CD8-positive, alpha-beta T cell (primary cell): ENCODE measurements at regions of chr9 and their contacts with region 1.

Region 1: GRCh38 chr9:133701862-133702797 is 36.0 kb downstream of the SARDH start:
- DNase-seq: peak in 8 of 9 experiments; percentile 55 to 85 (median 73)
- ATAC-seq: peak; percentile 76
- H3K4me3 ChIP-seq: peak overlapping the region; percentile 55 to 69
- H3K4me3 Mint-ChIP-seq: peak overlapping the region; percentile 75
- H3K27ac ChIP-seq: peak overlapping the region; percentile 71 to 81
- H3K27ac Mint-ChIP-seq: peak overlapping the region; percentile 97
- H3K4me1 ChIP-seq: peaks cover 41% of the 10 kb centered on the region
- H3K4me1 Mint-ChIP-seq: peaks cover 59% of the 10 kb centered on the region
- H3K27me3 ChIP-seq: no peaks in the 10 kb centered on the region
- H3K27me3 Mint-ChIP-seq: no peaks in the 10 kb centered on the region
- CTCF ChIP-seq: no peak

Region 2: GRCh38 chr9:133387425-133388079 is 314.6 kb before region 1 on chr9:
- CTCF ChIA-PET with region 1: no interaction called
- POLR2A ChIA-PET with region 1: no interaction called
- intact Hi-C with region 1: no loop called
- DNase-seq: no peak
- ATAC-seq: no peak
- H3K4me3 ChIP-seq: no peak overlapping the region
- H3K4me3 Mint-ChIP-seq: no peak overlapping the region
- H3K27ac ChIP-seq: no peak overlapping the region
- H3K27ac Mint-ChIP-seq: no peak overlapping the region
- H3K4me1 ChIP-seq: no peaks in the 10 kb centered on the region
- H3K4me1 Mint-ChIP-seq: no peaks in the 10 kb centered on the region
- H3K27me3 ChIP-seq: peaks cover 0 to 4% of the 10 kb centered on the region in 2 experiments
- H3K27me3 Mint-ChIP-seq: peaks cover 3% of the 10 kb centered on the region
- CTCF ChIP-seq: no peak

Region 3: GRCh38 chr9:133563001-133563796 is 138.9 kb before region 1 on chr9:
- CTCF ChIA-PET with region 1: no interaction called
- POLR2A ChIA-PET with region 1: no interaction called
- intact Hi-C with region 1: no loop called
- DNase-seq: no peak
- ATAC-seq: no peak
- H3K4me3 ChIP-seq: no peak overlapping the region
- H3K4me3 Mint-ChIP-seq: no peak overlapping the region
- H3K27ac ChIP-seq: no peak overlapping the region
- H3K27ac Mint-ChIP-seq: peak overlapping the region; percentile 73
- H3K4me1 ChIP-seq: peaks cover 7% of the 10 kb centered on the region
- H3K4me1 Mint-ChIP-seq: peaks cover 10% of the 10 kb centered on the region
- H3K27me3 ChIP-seq: no peaks in the 10 kb centered on the region
- H3K27me3 Mint-ChIP-seq: peaks cover 4% of the 10 kb centered on the region
- CTCF ChIP-seq: no peak

Region 4: DNA sequence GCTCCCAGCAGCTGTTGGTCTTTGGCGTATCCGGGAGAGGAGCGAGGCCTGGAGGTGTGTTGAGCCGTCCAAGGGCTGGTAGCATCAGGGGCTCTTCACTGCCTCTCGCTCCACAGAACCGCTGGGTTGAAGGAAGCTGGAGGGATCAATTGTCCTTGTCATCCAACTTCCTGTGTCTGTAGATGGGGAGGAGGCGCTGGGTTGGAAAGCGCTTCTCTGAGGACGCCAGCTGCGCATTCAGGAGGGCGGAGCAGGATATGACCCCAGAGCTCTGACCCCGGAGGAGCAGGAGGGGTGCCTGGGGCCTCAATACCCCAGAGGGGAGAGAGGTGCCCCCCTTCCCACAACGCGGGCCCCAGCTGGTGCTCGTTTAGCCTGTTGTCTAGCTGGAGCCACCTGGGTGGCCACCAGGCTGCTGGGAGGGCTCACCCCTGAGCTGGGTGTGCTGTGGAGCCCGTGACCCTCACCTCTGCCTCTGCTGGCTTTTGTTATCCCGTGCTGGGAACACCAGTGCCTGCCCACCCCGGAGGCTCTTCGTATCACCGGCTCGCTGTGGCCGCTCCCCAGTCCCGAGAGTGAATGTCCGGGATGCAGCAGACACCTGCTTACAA is 67.9 kb before region 1 on chr9:
- CTCF ChIA-PET with region 1: no interaction called
- POLR2A ChIA-PET with region 1: no interaction called
- intact Hi-C with region 1: no loop called
- DNase-seq: no peak
- ATAC-seq: no peak
- H3K4me3 ChIP-seq: no peak overlapping the region
- H3K4me3 Mint-ChIP-seq: no peak overlapping the region
- H3K27ac ChIP-seq: no peak overlapping the region
- H3K27ac Mint-ChIP-seq: no peak overlapping the region
- H3K4me1 ChIP-seq: no peaks in the 10 kb centered on the region
- H3K4me1 Mint-ChIP-seq: no peaks in the 10 kb centered on the region
- H3K27me3 ChIP-seq: no peaks in the 10 kb centered on the region
- H3K27me3 Mint-ChIP-seq: no peaks in the 10 kb centered on the region
- CTCF ChIP-seq: no peak

Region 5: DNA sequence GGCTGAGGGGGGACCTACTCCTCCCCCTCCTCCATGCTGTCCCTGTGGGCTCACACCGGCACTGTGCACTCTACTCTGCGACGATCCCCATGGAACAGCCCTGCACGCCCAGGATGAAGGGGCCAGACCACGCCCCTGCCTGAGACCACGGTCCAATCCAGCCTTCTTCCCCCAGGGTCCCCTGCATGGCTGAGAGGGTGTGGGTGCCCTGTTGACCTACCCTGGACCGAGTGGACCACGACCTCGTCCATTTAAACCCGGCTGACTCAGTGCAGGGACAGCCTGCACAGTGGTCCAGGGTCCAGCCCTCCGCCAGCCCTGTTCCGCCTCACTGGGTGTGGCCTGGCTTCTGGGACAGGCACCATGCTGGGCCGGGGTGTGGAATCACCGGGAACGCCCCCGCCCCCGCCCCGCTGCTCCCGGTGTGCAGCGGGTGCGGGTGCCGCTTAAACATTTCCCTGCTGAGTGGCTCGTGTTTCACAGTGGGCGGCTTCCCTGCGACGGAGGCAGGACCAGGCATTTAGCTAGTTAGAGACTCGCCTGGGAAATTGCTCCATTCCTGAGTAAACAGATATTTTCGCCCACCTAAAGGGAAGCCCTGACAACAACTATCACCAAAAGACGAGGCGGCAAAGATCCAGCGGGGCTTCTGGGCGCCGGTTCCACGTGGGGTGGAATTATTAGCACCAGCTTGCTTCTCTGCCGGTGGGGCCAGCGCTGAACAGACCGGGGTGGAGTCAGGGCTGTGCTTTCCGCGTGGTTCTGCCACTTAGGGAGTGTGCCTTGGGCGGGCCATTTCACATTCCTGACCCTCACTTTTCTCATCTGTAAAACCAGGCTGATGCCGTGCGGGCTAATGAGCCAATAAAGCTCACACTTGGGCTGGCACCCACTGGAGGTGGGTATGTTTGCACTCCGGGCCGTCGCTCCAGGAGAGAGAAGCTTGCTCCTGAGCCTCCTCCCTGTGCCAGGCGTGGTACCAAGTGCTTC is 43.4 kb before region 1 on chr9:
- CTCF ChIA-PET with region 1: interaction called, 3 read pairs
- POLR2A ChIA-PET with region 1: interaction called, 6 read pairs
- intact Hi-C with region 1: loop called in 1 of 2 experiments (anchors 1 kb)
- DNase-seq: no peak
- ATAC-seq: no peak
- H3K4me3 ChIP-seq: no peak overlapping the region
- H3K4me3 Mint-ChIP-seq: peak overlapping the region; percentile 54
- H3K27ac ChIP-seq: no peak overlapping the region
- H3K27ac Mint-ChIP-seq: peak overlapping the region; percentile 84
- H3K4me1 ChIP-seq: peaks cover 23% of the 10 kb centered on the region
- H3K4me1 Mint-ChIP-seq: peaks cover 41% of the 10 kb centered on the region
- H3K27me3 ChIP-seq: peaks cover 5 to 9% of the 10 kb centered on the region in 2 experiments
- H3K27me3 Mint-ChIP-seq: peaks cover 40% of the 10 kb centered on the region
- CTCF ChIP-seq: no peak

Region 6: GRCh38 chr9:133677126-133678010 is 24.8 kb before region 1 on chr9:
- CTCF ChIA-PET with region 1: interaction called, 3 read pairs
- POLR2A ChIA-PET with region 1: interaction called, 51 read pairs
- intact Hi-C with region 1: loop called in 1 of 2 experiments (anchors 2 kb)
- DNase-seq: peak; percentile 38 to 94 (median 66)
- ATAC-seq: peak; percentile 94
- H3K4me3 ChIP-seq: no peak overlapping the region
- H3K4me3 Mint-ChIP-seq: peak overlapping the region; percentile 68
- H3K27ac ChIP-seq: peak overlapping the region; percentile 64 to 79
- H3K27ac Mint-ChIP-seq: peak overlapping the region; percentile 100
- H3K4me1 ChIP-seq: peaks cover 28% of the 10 kb centered on the region
- H3K4me1 Mint-ChIP-seq: peaks cover 45% of the 10 kb centered on the region
- H3K27me3 ChIP-seq: no peaks in the 10 kb centered on the region
- H3K27me3 Mint-ChIP-seq: no peaks in the 10 kb centered on the region
- CTCF ChIP-seq: no peak

Region 7: DNA sequence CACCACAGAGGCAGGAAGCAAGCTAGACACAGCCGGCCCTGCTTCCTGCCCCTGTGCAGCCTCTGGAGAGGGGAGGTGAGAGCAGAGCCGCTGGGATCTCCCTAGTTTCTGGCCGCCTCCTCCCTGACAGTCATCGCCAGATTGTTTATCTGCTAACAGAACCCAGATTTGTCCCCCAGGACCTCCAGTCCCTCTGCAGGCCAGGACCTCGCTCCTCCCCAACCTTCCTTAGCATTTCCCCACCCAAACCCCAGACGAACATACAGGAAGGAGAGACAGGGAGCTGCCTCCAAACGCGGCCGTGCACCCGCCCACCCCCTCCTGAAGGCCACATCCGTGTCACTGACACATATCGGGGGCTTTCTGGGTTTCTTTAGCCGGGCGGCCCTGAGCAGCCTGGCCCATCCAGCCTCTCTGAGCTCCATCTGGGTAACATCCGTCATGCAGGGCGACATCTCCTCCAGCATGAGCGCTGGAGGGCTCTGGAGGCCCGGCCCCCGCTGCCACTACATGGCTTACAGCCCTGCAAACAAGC is 18.5 kb before region 1 on chr9:
- CTCF ChIA-PET with region 1: interaction called, 7 read pairs
- POLR2A ChIA-PET with region 1: interaction called, 51 read pairs
- intact Hi-C with region 1: loop called (anchors 1 kb)
- DNase-seq: peak; percentile 45 to 94 (median 74)
- ATAC-seq: peak; percentile 75
- H3K4me3 ChIP-seq: peak overlapping the region; percentile 3 to 16
- H3K4me3 Mint-ChIP-seq: peak overlapping the region; percentile 68
- H3K27ac ChIP-seq: peak overlapping the region; percentile 66 to 95
- H3K27ac Mint-ChIP-seq: peak overlapping the region; percentile 100
- H3K4me1 ChIP-seq: peaks cover 31% of the 10 kb centered on the region
- H3K4me1 Mint-ChIP-seq: peaks cover 41% of the 10 kb centered on the region
- H3K27me3 ChIP-seq: no peaks in the 10 kb centered on the region
- H3K27me3 Mint-ChIP-seq: no peaks in the 10 kb centered on the region
- CTCF ChIP-seq: no peak

Region 8: GRCh38 chr9:133691626-133692363 is 10.3 kb before region 1 on chr9:
- CTCF ChIA-PET with region 1: interaction called, 4 read pairs
- POLR2A ChIA-PET with region 1: interaction called, 16 read pairs
- intact Hi-C with region 1: no loop called
- DNase-seq: no peak
- ATAC-seq: peak; percentile 48
- H3K4me3 ChIP-seq: no peak overlapping the region
- H3K4me3 Mint-ChIP-seq: no peak overlapping the region
- H3K27ac ChIP-seq: no peak overlapping the region
- H3K27ac Mint-ChIP-seq: no peak overlapping the region
- H3K4me1 ChIP-seq: no peaks in the 10 kb centered on the region
- H3K4me1 Mint-ChIP-seq: peaks cover 10% of the 10 kb centered on the region
- H3K27me3 ChIP-seq: no peaks in the 10 kb centered on the region
- H3K27me3 Mint-ChIP-seq: no peaks in the 10 kb centered on the region
- CTCF ChIP-seq: no peak

Region 9: DNA sequence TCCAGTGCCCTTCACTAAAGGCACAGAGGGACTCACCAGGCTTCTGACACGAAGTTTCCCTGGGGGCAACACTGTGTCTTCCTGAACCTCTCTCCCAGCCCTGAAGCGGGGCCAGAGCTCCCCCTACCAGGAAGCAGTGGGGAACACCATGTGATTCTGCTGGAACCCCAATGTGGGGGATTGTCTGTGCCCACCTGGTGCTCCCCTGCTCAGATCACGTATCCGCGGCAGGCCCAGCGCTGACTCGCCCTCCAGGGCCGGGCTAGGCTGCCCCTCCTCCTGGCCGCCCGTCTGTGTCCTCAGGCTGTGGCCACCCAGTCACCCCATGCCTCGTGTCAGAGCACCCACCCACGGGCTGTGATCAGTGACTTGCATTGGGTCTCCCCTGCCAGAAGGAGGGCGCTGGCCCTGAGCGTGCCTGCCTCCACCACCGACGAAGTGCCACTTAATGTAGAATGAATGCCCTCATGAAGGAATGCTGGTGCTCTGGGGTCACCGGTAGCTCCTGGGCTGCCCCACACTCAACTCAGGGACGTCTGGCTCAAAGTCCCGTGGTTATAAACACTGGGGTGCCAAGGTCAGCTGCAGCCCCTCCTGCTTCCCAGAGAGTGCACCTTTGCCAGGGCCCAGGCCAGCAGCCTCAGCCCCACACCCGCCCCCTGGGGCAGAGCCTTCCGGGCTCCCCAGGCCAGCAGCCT is 13.9 kb after region 1 on chr9:
- CTCF ChIA-PET with region 1: interaction called, 13 read pairs
- POLR2A ChIA-PET with region 1: interaction called, 4 read pairs
- intact Hi-C with region 1: no loop called
- DNase-seq: peak in 8 of 9 experiments; percentile 25 to 68 (median 44)
- ATAC-seq: peak; percentile 82
- H3K4me3 ChIP-seq: no peak overlapping the region
- H3K4me3 Mint-ChIP-seq: no peak overlapping the region
- H3K27ac ChIP-seq: no peak overlapping the region
- H3K27ac Mint-ChIP-seq: no peak overlapping the region
- H3K4me1 ChIP-seq: peaks cover 8% of the 10 kb centered on the region
- H3K4me1 Mint-ChIP-seq: peaks cover 10% of the 10 kb centered on the region
- H3K27me3 ChIP-seq: no peaks in the 10 kb centered on the region
- H3K27me3 Mint-ChIP-seq: peaks cover 2% of the 10 kb centered on the region
- CTCF ChIP-seq: peak; percentile 53

Region 10: GRCh38 chr9:133734590-133735414 is 32.7 kb after region 1 on chr9:
- CTCF ChIA-PET with region 1: no interaction called
- POLR2A ChIA-PET with region 1: no interaction called
- intact Hi-C with region 1: no loop called
- DNase-seq: peak in 1 of 9 experiments; percentile 43
- ATAC-seq: no peak
- H3K4me3 ChIP-seq: no peak overlapping the region
- H3K4me3 Mint-ChIP-seq: no peak overlapping the region
- H3K27ac ChIP-seq: no peak overlapping the region
- H3K27ac Mint-ChIP-seq: no peak overlapping the region
- H3K4me1 ChIP-seq: peaks cover 14% of the 10 kb centered on the region
- H3K4me1 Mint-ChIP-seq: peaks cover 16% of the 10 kb centered on the region
- H3K27me3 ChIP-seq: no peaks in the 10 kb centered on the region
- H3K27me3 Mint-ChIP-seq: no peaks in the 10 kb centered on the region
- CTCF ChIP-seq: no peak